ENCODE measurements at regions of chr6 and their contacts with region 1.

Region 1: GRCh38 chr6:56637640-56638039 is 5.0 kb downstream of the DST start:
- DNase-seq: no peak
- ATAC-seq: peak; percentile 83
- H3K4me3 ChIP-seq: no peak overlapping the region
- H3K27ac ChIP-seq: no peak overlapping the region
- H3K4me1 ChIP-seq: no peaks in the 10 kb centered on the region
- H3K27me3 ChIP-seq: no peaks in the 10 kb centered on the region

Region 2: GRCh38 chr6:56699066-56699654 is 61.5 kb after region 1 on chr6:
- intact Hi-C with region 1: loop called (anchors 2 to 5 kb)
- DNase-seq: no peak
- ATAC-seq: no peak
- H3K4me3 ChIP-seq: no peak overlapping the region
- H3K27ac ChIP-seq: no peak overlapping the region
- H3K4me1 ChIP-seq: no peaks in the 10 kb centered on the region
- H3K27me3 ChIP-seq: no peaks in the 10 kb centered on the region

Region 3: GRCh38 chr6:56851541-56852259 is 214.1 kb after region 1 on chr6:
- intact Hi-C with region 1: loop called (anchors 5 kb)
- DNase-seq: no peak
- ATAC-seq: peak; percentile 92
- H3K4me3 ChIP-seq: peak overlapping the region; percentile 57 to 98
- H3K27ac ChIP-seq: peak overlapping the region; percentile 16 to 71
- H3K4me1 ChIP-seq: peaks cover 0 to 3% of the 10 kb centered on the region in 2 donors
- H3K27me3 ChIP-seq: no peaks in the 10 kb centered on the region

Region 4: DNA sequence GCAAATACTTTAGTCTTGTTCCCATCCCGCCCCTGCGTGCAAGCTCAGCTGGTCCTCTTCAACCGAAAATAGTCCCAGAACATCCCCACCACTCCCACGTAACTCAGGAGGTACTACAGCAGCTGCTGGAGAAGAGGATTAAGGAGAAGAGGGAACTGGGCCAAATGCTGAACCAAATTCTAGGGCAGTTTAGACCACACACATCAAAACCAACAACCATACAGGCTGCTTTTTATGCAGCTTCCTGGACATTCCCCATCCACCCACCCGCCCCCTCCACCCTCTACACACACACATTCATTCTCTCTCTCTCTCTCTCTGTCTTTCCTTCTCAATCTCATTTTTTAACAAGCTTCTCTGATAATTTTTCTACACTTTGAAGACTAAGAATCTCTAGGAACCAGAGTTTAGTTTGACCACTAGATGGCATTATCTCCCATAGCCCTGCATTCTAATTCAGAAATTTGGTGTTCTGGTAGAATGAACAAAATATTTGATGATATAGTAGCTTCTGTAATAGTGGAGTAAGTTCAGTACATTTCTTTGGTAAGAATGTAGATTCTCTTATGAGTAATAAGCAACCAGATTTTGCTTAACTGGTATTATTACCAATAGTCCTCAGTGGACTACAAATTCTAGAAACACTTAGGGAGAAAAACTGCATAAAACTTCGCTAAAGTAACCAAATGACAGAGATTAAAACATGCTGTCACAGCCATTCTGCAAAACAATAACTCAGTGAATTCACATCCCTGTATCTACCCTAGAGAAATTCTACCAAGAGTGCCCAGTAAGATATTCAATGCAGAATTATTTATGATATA is 265.2 kb after region 1 on chr6:
- intact Hi-C with region 1: no loop called
- DNase-seq: no peak
- ATAC-seq: no peak
- H3K4me3 ChIP-seq: no peak overlapping the region
- H3K27ac ChIP-seq: no peak overlapping the region
- H3K4me1 ChIP-seq: peaks cover 0 to 3% of the 10 kb centered on the region in 2 donors
- H3K27me3 ChIP-seq: no peaks in the 10 kb centered on the region

Measured in aorta (tissue), 5 donors.